ENCODE measurements at regions of chr16 and their contacts with region 1.

Region 1: DNA sequence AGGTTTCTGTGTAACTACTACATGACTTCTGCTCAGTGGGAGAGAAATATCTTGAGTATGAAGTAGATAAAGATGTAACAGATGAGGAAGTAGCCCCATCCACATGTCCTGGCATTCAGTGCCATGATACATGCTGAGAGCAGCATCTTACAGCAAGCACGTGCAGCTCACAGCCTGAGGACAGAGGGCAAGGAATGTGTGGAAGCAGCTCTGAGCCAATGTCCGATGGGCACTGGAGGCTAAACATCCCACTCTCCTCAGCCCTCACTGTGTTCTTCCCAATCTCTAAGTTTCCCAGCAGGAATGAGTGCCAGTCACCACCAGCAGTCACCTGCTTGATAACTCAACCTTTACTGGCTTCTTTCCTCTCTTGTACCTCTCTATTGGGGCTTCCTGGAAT is 40.4 kb downstream of the CFDP1 start:
- DNase-seq: no peak
- ATAC-seq: peak; percentile 25 to 60
- H3K4me3 ChIP-seq: no peak overlapping the region
- H3K27ac ChIP-seq: peak overlapping the region; percentile 23
- H3K4me1 ChIP-seq: peaks cover 5% of the 10 kb centered on the region
- H3K27me3 ChIP-seq: no peaks in the 10 kb centered on the region

Region 2: GRCh38 chr16:75219838-75220237 is 173.1 kb before region 1 on chr16:
- intact Hi-C with region 1: loop called in 1 of 4 experiments (anchors 5 kb)
- DNase-seq: no peak
- ATAC-seq: no peak
- H3K4me3 ChIP-seq: no peak overlapping the region
- H3K27ac ChIP-seq: no peak overlapping the region
- H3K4me1 ChIP-seq: no peaks in the 10 kb centered on the region
- H3K27me3 ChIP-seq: no peaks in the 10 kb centered on the region

Region 3: GRCh38 chr16:75495076-75495674 is 102.3 kb after region 1 on chr16 and contains the start of gene CHST6:
- intact Hi-C with region 1: no loop called
- DNase-seq: peak; percentile 73 to 85 (median 84)
- ATAC-seq: peak; percentile 82 to 90
- H3K4me3 ChIP-seq: peak within 1 kb of the TSS; percentile 14
- H3K27ac ChIP-seq: no peak within 1 kb of the TSS
- H3K4me1 ChIP-seq: no peaks in the 10 kb centered on the region
- H3K27me3 ChIP-seq: no peaks in the 10 kb centered on the region
- total RNA-seq, gene CHST6: 3.1 to 9.9 (median 4.3) TPM